OCI-LY7 (cell line): ENCODE measurements at regions of chr5 and their contacts with region 1.

Region 1: GRCh38 chr5:96924016-96924443 is 11.8 kb upstream of the LNPEP start:
- DNase-seq: peak; percentile 39
- H3K4me3 ChIP-seq: no peak overlapping the region
- H3K27ac ChIP-seq: peak overlapping the region; percentile 53
- H3K4me1 ChIP-seq: peaks cover 54% of the 10 kb centered on the region
- CTCF ChIP-seq: no peak

Region 2: DNA sequence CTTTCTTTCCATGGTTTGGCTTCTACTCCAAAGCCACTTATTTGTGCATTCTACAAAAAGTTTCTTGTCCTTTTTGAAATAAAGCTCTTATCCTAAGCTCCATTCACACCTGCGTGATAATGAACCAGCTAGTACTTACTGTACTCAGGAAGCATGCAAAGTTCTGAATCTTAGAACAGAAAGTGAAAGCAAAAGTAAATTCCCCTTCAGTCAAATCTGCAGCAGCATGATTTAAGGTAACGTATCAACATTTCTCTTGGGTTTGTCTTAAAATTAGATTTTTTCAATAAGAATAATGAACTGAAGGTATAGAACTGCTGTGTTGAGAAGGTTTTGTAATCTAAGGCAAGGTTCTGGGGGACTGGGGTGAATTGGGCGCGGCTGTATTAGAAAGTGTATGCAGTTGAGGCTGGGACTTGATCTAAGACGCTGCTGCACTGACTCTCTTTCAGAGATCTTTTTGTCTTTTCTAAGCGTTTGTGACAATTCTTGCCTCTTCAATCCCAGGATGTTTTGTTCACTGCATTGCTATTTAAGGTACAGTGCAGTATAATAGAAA is 47.7 kb before region 1 on chr5 and contains the start of gene ERAP2:
- CTCF ChIA-PET with region 1: interaction called, 4 read pairs
- POLR2A ChIA-PET with region 1: interaction called, 12 read pairs
- intact Hi-C with region 1: no loop called
- DNase-seq: peak; percentile 78
- H3K4me3 ChIP-seq: peak within 1 kb of the TSS; percentile 80
- H3K27ac ChIP-seq: peak within 1 kb of the TSS; percentile 64
- H3K4me1 ChIP-seq: peaks cover 69% of the 10 kb centered on the region
- CTCF ChIP-seq: no peak
- total RNA-seq, gene ERAP2: 29.3 and 35.6 TPM in 2 replicates